ENCODE measurements at regions of chr2 and their contacts with region 1.

Region 1: DNA sequence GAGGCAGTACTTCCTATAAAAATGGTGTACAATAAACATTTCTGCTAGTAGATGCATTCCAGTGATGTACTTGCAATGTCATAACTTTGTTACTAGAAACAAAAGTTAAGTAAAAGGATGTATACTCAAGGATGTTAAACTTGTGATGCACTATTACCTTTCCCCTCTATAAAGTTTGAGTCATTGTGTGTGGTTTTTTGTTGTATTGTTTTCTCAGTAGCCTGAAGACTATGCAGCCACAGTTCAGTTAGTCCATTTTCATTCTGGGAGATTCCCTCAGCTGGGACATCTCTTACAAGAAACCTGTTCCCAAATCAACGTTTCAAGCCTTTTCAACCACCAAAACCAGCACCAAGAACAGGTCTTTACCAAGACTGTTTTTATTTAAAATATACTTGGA is 5.6 kb downstream of the ATP5MC3 start:
- DNase-seq: no peak
- ATAC-seq: no peak
- H3K4me3 ChIP-seq: no peak overlapping the region
- H3K27ac ChIP-seq: no peak overlapping the region
- H3K4me1 ChIP-seq: peaks cover 0 to 55% (median 24%) of the 10 kb centered on the region in 12 donors
- H3K27me3 ChIP-seq: no peaks in the 10 kb centered on the region
- CTCF ChIP-seq: no peak
- POLR2A ChIP-seq: no peak

Region 2: GRCh38 chr2:175131252-175131651 is 44.6 kb before region 1 on chr2:
- intact Hi-C with region 1: loop called in 1 of 10 experiments (anchors 5 kb)
- DNase-seq: no peak
- ATAC-seq: peak; percentile 71 to 89 (median 84)
- H3K4me3 ChIP-seq: no peak overlapping the region
- H3K27ac ChIP-seq: peak overlapping the region in 4 of 12 donors; percentile 15 to 35 (median 16)
- H3K4me1 ChIP-seq: peaks cover 0 to 26% (median 4%) of the 10 kb centered on the region in 12 donors
- H3K27me3 ChIP-seq: no peaks in the 10 kb centered on the region
- CTCF ChIP-seq: no peak
- POLR2A ChIP-seq: no peak